K562 (cell line): ENCODE measurements at regions of chr10 and their contacts with region 1.

Region 1: DNA sequence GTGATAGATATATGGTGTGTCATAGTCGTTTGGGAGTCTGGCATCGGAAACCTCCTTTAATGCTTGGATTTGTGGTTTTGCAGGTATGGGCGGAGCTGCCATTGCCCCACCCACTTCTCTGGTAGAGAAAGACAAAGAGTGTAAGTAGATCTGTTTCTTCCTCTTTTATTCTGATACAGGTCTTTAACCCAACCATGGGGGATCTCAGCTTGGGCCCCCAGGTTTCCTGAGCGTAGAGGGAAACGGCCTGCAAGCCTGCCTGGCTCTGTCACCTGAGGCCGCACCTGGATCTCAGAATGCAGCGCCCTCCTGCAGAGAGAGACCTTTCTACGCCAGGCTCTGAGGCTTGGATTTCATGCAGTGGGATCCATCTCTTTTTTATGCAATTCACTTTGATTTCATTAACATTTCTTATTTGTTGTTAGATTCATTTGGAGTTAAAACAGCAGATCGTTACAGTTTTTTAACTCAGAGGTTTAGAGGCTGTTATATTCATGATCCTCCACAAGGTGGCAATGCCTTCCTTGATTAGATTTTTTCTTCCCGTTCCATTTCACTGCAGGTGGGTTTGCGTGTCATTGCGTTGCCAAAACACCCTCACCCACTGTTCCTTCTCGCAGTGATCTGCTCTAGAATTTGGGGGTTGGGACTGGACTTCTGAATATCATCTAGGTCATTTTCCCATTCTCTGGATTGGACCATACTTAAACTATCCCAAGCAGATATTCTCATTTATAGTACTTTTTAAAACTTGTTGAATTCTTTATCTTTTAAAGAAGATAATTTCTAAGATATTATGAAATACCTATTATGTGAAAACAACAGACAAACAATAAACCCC is 20.0 kb downstream of the RBM17 start:
- DNase-seq: peak; percentile 50 to 61 (median 53)
- ATAC-seq: peak; percentile 64
- H3K4me3 ChIP-seq: no peak overlapping the region
- H3K27ac ChIP-seq: no peak overlapping the region
- H3K4me1 ChIP-seq: no peaks in the 10 kb centered on the region; a peak in 1 of 5 replicates
- H3K27me3 ChIP-seq: no peaks in the 10 kb centered on the region
- CTCF ChIP-seq: peak; percentile 48 to 74 (median 59); a peak in 5 of 6 replicates
- EP300 ChIP-seq: no peak
- POLR2A ChIP-seq: no peak
- RAD21 ChIP-seq: peak; percentile 77

Region 2: DNA sequence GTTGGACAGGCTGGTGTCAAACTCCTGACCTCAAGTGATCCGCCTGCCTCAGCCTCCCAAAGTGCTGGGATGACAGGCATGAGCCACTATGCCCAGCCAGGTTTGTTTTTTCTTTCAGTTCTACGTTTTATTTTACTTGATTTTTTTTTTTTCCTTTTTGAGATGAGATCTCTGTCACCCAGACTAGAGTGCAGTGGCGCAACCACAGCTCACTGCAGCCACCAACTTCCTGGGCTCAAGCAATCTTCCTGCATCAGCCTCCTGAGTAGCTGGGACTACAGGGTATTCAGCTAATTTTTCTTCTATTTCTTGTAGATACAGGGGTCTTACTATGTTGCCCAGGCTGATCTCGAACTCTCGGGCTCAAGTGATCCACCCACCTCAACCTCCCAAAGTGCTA is 319.9 kb before region 1 on chr10:
- CTCF ChIA-PET with region 1: no interaction called
- POLR2A ChIA-PET with region 1: no interaction called
- in situ Hi-C with region 1: no loop called
- intact Hi-C with region 1: no loop called
- DNase-seq: no peak
- ATAC-seq: no peak
- H3K4me3 ChIP-seq: no peak overlapping the region
- H3K27ac ChIP-seq: no peak overlapping the region
- H3K4me1 ChIP-seq: no peaks in the 10 kb centered on the region
- H3K27me3 ChIP-seq: no peaks in the 10 kb centered on the region
- CTCF ChIP-seq: no peak
- EP300 ChIP-seq: no peak
- POLR2A ChIP-seq: no peak
- RAD21 ChIP-seq: no peak

Region 3: GRCh38 chr10:6151087-6151977 is 42.5 kb after region 1 on chr10:
- CTCF ChIA-PET with region 1: interaction called, 16 read pairs
- POLR2A ChIA-PET with region 1: no interaction called
- in situ Hi-C with region 1: no loop called
- intact Hi-C with region 1: loop called (anchors 5 kb)
- DNase-seq: peak; percentile 47 to 80 (median 59)
- ATAC-seq: peak; percentile 93
- H3K4me3 ChIP-seq: no peak overlapping the region
- H3K27ac ChIP-seq: peak overlapping the region; percentile 26; the same call in 2 of the 3 replicates
- H3K4me1 ChIP-seq: peaks cover 13 to 32% of the 10 kb centered on the region in 2 experiments
- H3K27me3 ChIP-seq: no peaks in the 10 kb centered on the region
- CTCF ChIP-seq: peak; percentile 74 to 92 (median 79)
- EP300 ChIP-seq: no peak
- POLR2A ChIP-seq: no peak
- RAD21 ChIP-seq: peak; percentile 57 to 63

Region 4: GRCh38 chr10:6202684-6203330 is 94.0 kb after region 1 on chr10 and contains the start of gene PFKFB3:
- CTCF ChIA-PET with region 1: interaction called, 4 read pairs
- POLR2A ChIA-PET with region 1: interaction called, 4 read pairs
- in situ Hi-C with region 1: no loop called
- intact Hi-C with region 1: loop called (anchors 2 kb)
- DNase-seq: peak; percentile 91 to 96 (median 95)
- ATAC-seq: peak; percentile 94
- H3K4me3 ChIP-seq: peak within 1 kb of the TSS; percentile 62
- H3K27ac ChIP-seq: peak within 1 kb of the TSS; percentile 50; the same call in 2 of the 3 replicates
- H3K4me1 ChIP-seq: peaks cover 8 to 40% of the 10 kb centered on the region in 2 experiments
- H3K27me3 ChIP-seq: no peaks in the 10 kb centered on the region
- CTCF ChIP-seq: peak; percentile 87 to 89 (median 87)
- EP300 ChIP-seq: no peak
- POLR2A ChIP-seq: peak; percentile 45; the same call in 1 of the 2 replicates
- RAD21 ChIP-seq: peak; percentile 76 to 85
- polyA plus RNA-seq, gene PFKFB3: 0.46 to 0.73 TPM